GM12878 (cell line): ENCODE measurements at regions of chr12 and their contacts with region 1.

Region 1: DNA sequence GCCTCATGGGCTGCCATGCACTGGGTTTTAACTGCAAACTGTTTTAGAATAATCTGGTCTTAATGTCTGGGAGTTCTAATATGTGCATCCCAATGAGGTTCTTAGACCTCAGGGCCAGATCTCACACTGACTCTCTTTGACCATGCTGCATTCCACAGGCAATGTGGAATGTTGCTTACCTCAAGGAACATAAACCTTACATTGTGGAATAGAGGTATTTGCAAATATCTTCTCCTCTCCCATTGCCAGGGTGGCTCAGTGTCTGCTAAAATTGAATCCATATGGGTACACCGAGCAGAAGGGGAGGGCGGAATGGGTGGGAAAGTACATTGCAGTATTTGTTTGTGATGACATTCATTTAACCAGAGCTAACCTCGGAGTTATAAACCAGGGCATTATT is 78.6 kb downstream of the CHST11 start:
- DNase-seq: no peak
- ATAC-seq: no peak
- H3K4me3 ChIP-seq: no peak overlapping the region
- H3K27ac ChIP-seq: no peak overlapping the region
- H3K4me1 ChIP-seq: peaks cover 9% of the 10 kb centered on the region; the same call in 1 of the 2 replicates
- H3K27me3 ChIP-seq: no peaks in the 10 kb centered on the region
- CTCF ChIP-seq: no peak
- EP300 ChIP-seq: no peak
- POLR2A ChIP-seq: no peak
- RAD21 ChIP-seq: no peak

Region 2: DNA sequence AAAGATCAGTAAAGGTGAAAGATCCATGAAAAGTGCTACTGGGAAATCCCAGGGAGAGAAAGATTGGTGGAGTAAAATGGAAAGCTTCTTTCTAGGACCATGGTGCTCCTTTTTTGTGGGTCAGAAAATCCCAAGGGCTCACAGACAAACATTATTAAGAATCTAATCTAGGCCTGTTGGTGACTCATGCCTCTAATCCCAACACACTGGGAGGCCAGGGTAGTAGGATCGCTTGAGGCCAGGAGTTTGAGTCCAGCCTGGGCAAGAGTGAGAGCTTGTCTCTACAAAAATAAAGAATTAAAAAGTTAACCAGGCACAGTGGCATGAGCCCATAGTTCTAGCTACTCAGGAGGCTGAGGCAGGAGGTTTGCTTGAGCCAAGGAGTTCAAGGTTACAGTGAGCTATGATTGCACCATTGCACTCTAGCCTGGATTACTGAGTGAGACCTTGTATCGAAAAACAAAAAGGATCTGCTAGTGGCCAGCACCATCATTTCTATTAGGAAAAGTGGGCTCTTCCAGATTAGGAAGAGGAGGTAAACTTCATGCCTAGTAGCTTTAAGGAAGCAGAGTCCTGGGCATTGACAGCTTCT is 276.8 kb before region 1 on chr12:
- CTCF ChIA-PET with region 1: no interaction called
- POLR2A ChIA-PET with region 1: no interaction called
- RAD21 ChIA-PET with region 1: no interaction called
- SMC1A ChIA-PET with region 1: no interaction called
- in situ Hi-C with region 1: no loop called
- intact Hi-C with region 1: no loop called
- DNase-seq: no peak
- ATAC-seq: no peak
- H3K4me3 ChIP-seq: no peak overlapping the region
- H3K27ac ChIP-seq: no peak overlapping the region
- H3K4me1 ChIP-seq: no peaks in the 10 kb centered on the region
- H3K27me3 ChIP-seq: no peaks in the 10 kb centered on the region
- CTCF ChIP-seq: no peak
- EP300 ChIP-seq: no peak
- POLR2A ChIP-seq: no peak
- RAD21 ChIP-seq: no peak

Region 3: DNA sequence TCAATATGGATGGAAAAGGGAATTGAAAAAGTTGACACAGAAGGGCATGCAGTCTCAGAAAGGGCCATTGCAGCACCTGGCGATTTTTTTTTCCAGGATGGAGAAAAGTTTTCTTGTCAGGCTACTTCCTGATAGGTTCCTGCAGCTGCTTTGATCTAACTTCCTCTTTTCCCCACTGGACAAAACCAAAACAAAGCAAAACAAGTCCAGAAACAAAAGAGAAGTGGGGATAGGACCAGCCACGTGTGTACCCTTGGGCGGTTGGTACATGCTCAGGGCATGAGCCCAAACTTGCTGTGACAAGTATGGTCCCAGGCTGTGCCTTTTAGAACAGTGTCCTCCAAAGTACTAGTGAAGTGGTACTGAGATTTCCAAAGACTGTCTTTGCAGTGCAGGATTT is 11.2 kb after region 1 on chr12:
- CTCF ChIA-PET with region 1: interaction called, 3 read pairs
- POLR2A ChIA-PET with region 1: interaction called, 3 read pairs
- RAD21 ChIA-PET with region 1: interaction called, 5 read pairs
- SMC1A ChIA-PET with region 1: interaction called, 12 read pairs
- in situ Hi-C with region 1: no loop called
- intact Hi-C with region 1: no loop called
- DNase-seq: no peak
- ATAC-seq: peak; percentile 51
- H3K4me3 ChIP-seq: no peak overlapping the region
- H3K27ac ChIP-seq: 0 out of 2 replicates have a peak overlapping the region, but pooled peaks have one; percentile 8
- H3K4me1 ChIP-seq: peaks cover 10% of the 10 kb centered on the region
- H3K27me3 ChIP-seq: no peaks in the 10 kb centered on the region
- CTCF ChIP-seq: no peak
- EP300 ChIP-seq: no peak
- POLR2A ChIP-seq: no peak
- RAD21 ChIP-seq: no peak